OCI-LY7 (cell line): ENCODE measurements at regions of chr14 and their contacts with region 1.

Region 1: DNA sequence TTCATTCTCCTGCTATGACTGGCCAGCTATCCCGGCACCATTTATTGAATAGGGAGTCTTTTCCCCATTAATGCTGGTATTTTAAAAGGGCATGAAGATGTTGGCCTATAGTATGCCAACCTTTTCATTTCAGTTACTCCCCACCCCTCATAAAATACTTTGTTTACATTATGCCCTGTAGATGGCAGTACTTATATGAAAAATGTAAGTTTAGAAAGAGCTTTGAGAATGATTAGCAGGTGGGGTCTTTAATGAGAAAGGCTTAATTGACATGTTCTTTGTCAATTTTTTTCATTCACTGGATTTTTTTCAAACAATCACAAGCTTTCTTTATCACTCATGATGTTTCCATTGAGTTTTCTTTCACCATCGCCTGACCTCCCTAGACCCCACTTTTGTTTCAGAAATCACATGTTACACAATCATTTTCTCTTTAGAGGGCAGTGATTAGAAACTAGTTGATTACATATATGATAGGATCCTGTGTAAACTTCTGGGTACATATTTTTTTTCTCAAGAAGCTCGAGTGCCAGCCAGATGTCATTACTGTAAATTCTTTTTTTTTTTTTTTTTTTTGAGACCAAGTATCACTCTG is 62.6 kb upstream of the PSMA6 start:
- DNase-seq: peak; percentile 61
- H3K4me3 ChIP-seq: no peak overlapping the region
- H3K27ac ChIP-seq: no peak overlapping the region
- H3K4me1 ChIP-seq: peaks cover 7% of the 10 kb centered on the region
- CTCF ChIP-seq: peak; percentile 87

Region 2: DNA sequence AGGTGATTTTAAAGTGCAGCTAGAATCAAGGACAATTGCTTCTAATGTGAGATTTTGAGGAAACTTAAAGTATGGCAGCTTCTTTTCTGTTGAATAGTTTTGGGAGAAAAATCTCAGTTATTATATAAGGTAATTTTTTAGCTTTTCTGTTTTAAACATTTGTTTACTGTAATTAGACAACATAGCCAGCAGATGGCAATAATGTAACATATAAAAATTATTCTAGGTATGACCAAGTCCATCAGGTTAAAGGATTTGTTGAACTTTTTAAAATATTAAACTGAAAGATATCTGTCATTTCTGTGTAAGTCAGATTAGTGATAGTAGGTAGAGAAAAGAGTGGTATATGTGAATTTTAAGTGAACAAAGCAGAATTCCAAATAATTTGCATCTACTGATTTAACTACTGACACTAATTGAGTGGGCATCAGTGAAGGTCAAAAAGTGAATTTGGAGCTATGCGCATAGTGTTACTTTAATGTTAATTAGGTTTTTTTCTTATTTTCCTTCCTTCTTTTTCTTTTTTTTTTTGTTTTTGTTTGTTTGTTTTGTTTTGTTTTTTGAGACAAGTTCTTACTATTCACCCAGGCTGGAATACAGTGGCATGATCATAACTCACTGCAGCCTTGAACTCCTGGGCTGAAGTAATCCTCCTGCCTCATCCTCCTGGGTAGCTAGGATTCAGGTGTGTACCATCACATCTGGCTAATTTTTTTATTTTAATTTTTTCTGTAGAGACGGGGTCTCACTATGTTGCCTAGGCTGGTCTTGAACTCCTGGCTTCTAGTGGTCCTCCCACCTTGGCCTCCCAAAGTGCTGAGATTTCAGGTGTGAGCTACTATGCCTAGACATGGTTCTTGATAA is 88.6 kb before region 1 on chr14:
- CTCF ChIA-PET with region 1: no interaction called
- POLR2A ChIA-PET with region 1: interaction called, 3 read pairs
- intact Hi-C with region 1: loop called (anchors 5 kb)
- DNase-seq: peak; percentile 59
- H3K4me3 ChIP-seq: no peak overlapping the region
- H3K27ac ChIP-seq: no peak overlapping the region
- H3K4me1 ChIP-seq: no peaks in the 10 kb centered on the region
- CTCF ChIP-seq: peak; percentile 88

Region 3: GRCh38 chr14:35285168-35286002 is 55.8 kb after region 1 on chr14:
- CTCF ChIA-PET with region 1: interaction called, 3 read pairs
- POLR2A ChIA-PET with region 1: no interaction called
- intact Hi-C with region 1: loop called (anchors 5 kb)
- DNase-seq: peak; percentile 81
- H3K4me3 ChIP-seq: peak overlapping the region; percentile 59
- H3K27ac ChIP-seq: peak overlapping the region; percentile 99
- H3K4me1 ChIP-seq: peaks cover 81% of the 10 kb centered on the region
- CTCF ChIP-seq: no peak

Region 4: DNA sequence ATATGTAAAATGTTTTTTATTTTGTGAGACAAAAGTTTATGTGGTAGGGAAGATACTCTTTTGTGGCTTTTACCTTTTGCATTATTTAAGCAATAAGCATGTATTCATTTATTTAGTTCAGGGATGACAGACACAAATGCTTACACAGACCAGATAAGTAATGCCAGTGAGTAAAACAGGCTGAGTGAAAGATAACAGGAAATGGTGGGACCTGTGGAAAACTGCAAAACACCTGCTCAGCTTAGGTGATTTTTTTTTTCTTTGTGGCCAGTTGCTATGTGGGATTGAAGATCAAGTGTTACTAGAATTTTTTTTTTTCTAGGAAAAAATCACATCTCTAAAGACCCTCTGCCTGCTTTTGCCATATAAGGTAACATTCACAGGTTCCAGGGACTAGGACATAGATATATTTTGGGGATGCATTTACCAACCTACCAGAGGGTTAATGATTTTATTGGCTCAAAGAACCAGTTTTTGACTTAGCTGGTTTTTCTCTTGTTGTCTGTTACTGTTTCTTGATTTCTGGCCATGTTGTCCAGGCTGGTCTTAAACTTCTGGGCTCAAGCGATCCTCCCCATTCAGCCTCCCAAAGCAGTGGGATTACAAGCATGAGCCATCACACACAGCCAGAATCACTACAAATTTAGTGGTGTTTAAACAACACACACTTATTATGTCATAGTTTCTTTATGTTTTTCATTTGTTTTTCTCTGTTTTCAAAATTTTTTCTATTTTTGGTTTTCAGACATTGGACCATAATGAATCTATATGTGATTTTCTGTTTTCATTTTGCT is 72.3 kb after region 1 on chr14:
- CTCF ChIA-PET with region 1: no interaction called
- POLR2A ChIA-PET with region 1: no interaction called
- intact Hi-C with region 1: loop called (anchors 5 kb)
- DNase-seq: peak; percentile 31
- H3K4me3 ChIP-seq: peak overlapping the region; percentile 16
- H3K27ac ChIP-seq: peak overlapping the region; percentile 52
- H3K4me1 ChIP-seq: peaks cover 46% of the 10 kb centered on the region
- CTCF ChIP-seq: no peak